ENCODE measurements at regions of chr19 and their contacts with region 1.

Region 1: DNA sequence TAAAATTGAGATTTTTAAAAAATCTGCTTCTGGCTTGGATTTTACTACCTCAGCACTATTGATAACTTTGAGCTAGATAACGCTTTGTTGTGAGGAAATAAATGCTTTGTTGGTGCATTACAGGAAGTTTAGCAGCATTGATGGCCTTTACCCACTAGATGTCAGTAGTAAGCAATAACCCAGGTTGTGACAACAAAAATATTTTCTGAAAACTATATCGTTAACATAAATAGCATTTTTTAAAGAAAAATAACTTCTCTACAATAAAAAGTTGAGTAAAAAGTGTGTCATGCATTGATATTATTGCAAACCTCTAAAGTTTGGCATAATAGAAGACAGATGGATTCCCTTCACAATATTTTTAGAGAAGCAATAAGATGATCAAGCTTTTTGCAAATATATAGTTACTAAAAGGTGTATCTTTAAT is 1246.5 kb downstream of the UQCRFS1 start:
- DNase-seq: peak; percentile 36
- ATAC-seq: no peak
- H3K4me3 ChIP-seq: no peak overlapping the region
- H3K27ac ChIP-seq: no peak overlapping the region
- H3K4me1 ChIP-seq: no peaks in the 10 kb centered on the region
- H3K27me3 ChIP-seq: no peaks in the 10 kb centered on the region
- CTCF ChIP-seq: peak; percentile 62

Region 2: DNA sequence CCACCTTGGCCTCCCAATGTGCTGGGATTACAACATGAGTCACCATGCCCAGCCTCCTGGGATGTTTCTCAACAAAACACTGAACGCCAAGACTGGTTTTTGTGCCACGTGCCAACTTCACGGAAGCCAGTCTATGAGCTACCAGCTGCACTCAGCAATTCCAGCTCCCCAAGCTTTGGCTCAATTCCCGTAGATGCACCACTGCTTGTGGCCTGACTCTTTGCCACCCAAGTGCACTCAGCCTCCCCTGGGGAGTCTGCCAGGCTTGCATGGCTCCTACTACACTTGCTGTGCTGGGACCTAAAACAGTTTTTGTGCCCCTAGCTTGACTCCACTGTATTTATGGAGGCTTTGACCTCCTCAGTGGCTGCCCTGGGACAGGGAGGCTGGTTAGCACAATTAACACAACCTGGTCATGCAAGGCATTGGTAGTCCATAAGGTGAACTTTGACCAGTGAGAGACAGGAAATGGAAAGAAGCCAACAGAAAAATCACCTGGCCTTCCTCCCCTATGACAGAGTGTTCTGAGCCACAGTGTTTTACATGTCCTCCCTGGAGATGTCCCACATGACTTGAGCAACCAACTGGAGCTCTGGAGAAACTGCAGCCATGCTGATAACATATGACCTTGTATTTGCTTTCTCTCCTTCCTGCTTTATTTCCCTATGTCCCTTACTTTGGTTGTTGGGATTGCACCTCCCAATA is 73.4 kb after region 1 on chr19:
- CTCF ChIA-PET with region 1: no interaction called
- POLR2A ChIA-PET with region 1: no interaction called
- intact Hi-C with region 1: no loop called
- DNase-seq: no peak
- ATAC-seq: no peak
- H3K4me3 ChIP-seq: no peak overlapping the region
- H3K27ac ChIP-seq: no peak overlapping the region
- H3K4me1 ChIP-seq: no peaks in the 10 kb centered on the region
- H3K27me3 ChIP-seq: no peaks in the 10 kb centered on the region
- CTCF ChIP-seq: no peak

Region 3: DNA sequence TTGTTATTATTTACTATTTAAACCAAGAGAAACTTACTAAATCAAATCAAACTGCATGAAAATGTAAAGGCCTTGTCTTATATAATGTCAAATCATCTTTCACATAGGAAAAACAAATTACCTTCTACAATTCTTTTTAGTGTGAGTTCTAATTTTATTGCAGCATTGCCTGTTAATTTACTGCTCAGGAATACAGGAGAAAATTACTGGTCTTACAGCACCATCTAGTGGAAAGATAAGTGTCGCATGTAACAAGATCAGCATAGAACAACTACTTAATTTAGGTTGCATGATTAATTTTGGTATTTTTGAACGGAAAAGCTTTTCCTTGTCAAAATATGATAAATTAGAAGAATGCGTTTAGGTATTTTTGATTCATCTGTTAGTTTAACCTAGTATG is 743.9 kb after region 1 on chr19:
- CTCF ChIA-PET with region 1: no interaction called
- POLR2A ChIA-PET with region 1: no interaction called
- intact Hi-C with region 1: loop called (anchors 1 kb)
- DNase-seq: peak; percentile 65
- ATAC-seq: no peak
- H3K4me3 ChIP-seq: no peak overlapping the region
- H3K27ac ChIP-seq: no peak overlapping the region
- H3K4me1 ChIP-seq: no peaks in the 10 kb centered on the region
- H3K27me3 ChIP-seq: no peaks in the 10 kb centered on the region
- CTCF ChIP-seq: peak; percentile 70

Measured in PC-3 (cell line).